AG04450 (cell line): ENCODE measurements at regions of chr3 and their contacts with region 1.

Region 1: GRCh38 chr3:119891944-119892721 is 110.2 kb downstream of the NR1I2 start:
- DNase-seq: peak; percentile 38
- H3K4me3 ChIP-seq: no peak overlapping the region
- H3K27ac ChIP-seq: no peak overlapping the region
- H3K27me3 ChIP-seq: no peaks in the 10 kb centered on the region
- CTCF ChIP-seq: peak; percentile 72

Region 2: GRCh38 chr3:119628816-119629445 is 263.2 kb before region 1 on chr3:
- CTCF ChIA-PET with region 1: no interaction called
- POLR2A ChIA-PET with region 1: no interaction called
- DNase-seq: no peak
- H3K4me3 ChIP-seq: no peak overlapping the region
- H3K27ac ChIP-seq: no peak overlapping the region
- H3K27me3 ChIP-seq: peaks cover 13% of the 10 kb centered on the region
- CTCF ChIP-seq: no peak

Region 3: GRCh38 chr3:119870512-119870911 is 21.6 kb before region 1 on chr3:
- CTCF ChIA-PET with region 1: no interaction called
- POLR2A ChIA-PET with region 1: no interaction called
- DNase-seq: no peak
- H3K4me3 ChIP-seq: no peak overlapping the region
- H3K27ac ChIP-seq: no peak overlapping the region
- H3K27me3 ChIP-seq: no peaks in the 10 kb centered on the region
- CTCF ChIP-seq: no peak

Region 4: DNA sequence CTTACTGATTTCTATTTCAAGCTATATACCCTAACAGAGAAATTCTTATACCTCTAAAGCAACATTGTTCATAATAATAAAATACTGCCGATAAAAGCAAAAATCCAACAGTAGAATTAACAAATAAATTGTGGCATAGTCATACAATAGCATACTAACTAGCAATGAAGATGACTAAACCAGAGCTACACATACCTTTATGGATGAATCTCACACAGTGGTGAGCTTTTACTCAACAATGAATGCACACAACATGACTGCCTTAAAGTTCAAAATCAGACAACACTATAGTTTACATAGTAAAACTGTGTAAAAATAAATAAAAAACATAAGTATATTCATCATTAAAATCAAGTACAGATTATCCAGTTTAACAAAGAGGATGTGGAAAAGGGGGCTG is 11.2 kb before region 1 on chr3:
- CTCF ChIA-PET with region 1: interaction called, 13 read pairs
- POLR2A ChIA-PET with region 1: no interaction called
- DNase-seq: no peak
- H3K4me3 ChIP-seq: no peak overlapping the region
- H3K27ac ChIP-seq: no peak overlapping the region
- H3K27me3 ChIP-seq: no peaks in the 10 kb centered on the region
- CTCF ChIP-seq: no peak

Region 5: GRCh38 chr3:119955972-119956371 is 63.8 kb after region 1 on chr3:
- CTCF ChIA-PET with region 1: no interaction called
- POLR2A ChIA-PET with region 1: no interaction called
- DNase-seq: no peak
- H3K4me3 ChIP-seq: no peak overlapping the region
- H3K27ac ChIP-seq: no peak overlapping the region
- H3K27me3 ChIP-seq: no peaks in the 10 kb centered on the region
- CTCF ChIP-seq: no peak

Region 6: DNA sequence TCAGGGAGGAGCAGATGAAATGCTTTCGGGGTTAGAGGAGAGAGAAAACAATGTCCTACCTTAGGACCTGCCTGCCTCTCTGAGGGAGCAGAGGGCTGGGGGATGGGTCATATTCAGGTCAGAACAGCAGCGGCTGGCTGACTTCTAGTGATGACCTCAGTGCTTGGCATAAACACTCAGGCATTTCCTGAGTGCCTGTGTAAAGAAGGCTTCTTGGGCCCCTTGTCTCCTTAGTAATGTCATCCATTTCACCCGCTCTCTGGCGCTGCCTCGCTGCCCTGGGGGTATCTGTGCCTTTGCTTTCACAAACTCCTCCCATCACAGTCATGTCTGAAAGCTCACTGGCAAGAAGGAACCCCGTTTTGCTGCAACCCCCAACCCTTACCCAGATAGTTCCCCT is 285.0 kb after region 1 on chr3:
- CTCF ChIA-PET with region 1: interaction called, 31 read pairs
- POLR2A ChIA-PET with region 1: no interaction called
- DNase-seq: peak; percentile 50
- H3K4me3 ChIP-seq: peak overlapping the region; percentile 13; the same call in 1 of the 2 replicates
- H3K27ac ChIP-seq: peak overlapping the region; percentile 82
- H3K27me3 ChIP-seq: no peaks in the 10 kb centered on the region
- CTCF ChIP-seq: peak; percentile 24; the same call in 1 of the 2 replicates

Region 7: DNA sequence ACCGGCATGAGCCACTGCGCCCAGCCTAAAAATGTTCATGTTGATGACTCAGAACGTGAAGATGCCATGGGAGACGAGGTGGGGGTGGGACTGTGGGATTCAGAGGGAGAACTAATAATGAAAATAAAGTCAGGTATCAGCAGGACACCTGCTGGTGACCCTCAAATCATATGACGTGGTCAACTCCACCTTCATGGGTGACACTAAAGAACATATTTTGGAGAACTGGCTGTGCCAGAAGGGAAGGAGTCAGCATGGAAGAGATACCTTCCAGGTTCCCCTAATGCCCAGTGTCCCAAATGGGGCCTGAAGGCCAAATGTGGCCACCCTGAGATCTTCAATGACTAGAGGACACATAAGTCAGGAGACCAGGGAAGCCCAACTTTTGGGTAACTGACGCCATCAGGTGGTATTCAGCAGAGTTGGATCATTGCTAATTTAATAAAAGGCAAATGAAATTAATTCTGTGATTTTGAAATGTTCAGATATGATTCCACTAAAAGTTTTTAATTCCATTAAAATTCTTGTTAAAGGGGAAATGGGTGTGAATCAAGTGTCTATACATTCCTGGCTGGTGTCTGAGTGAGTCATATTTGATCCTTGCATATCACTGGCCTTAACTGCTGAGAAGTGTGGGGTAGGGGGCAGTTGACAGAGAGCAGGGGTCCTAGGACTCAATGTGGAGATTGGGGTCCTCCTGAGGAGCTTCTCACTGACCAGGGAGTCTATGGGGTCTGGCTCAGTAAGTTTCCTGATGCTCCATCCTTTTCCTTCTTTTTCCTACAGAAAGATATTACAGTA is 290.8 kb after region 1 on chr3:
- CTCF ChIA-PET with region 1: interaction called, 31 read pairs
- POLR2A ChIA-PET with region 1: no interaction called
- DNase-seq: no peak
- H3K4me3 ChIP-seq: no peak overlapping the region
- H3K27ac ChIP-seq: no peak overlapping the region
- H3K27me3 ChIP-seq: no peaks in the 10 kb centered on the region
- CTCF ChIP-seq: peak; percentile 49